ENCODE measurements at regions of chr13 and their contacts with region 1.

Region 1: GRCh38 chr13:35699805-35700510 is 223.5 kb upstream of the MAB21L1 start:
- DNase-seq: no peak

Region 2: GRCh38 chr13:35714588-35715377 is 14.8 kb after region 1 on chr13:
- intact Hi-C with region 1: loop called in 1 of 2 experiments (anchors 1 kb)
- DNase-seq: no peak

Region 3: GRCh38 chr13:35733827-35734226 is 33.9 kb after region 1 on chr13:
- intact Hi-C with region 1: loop called in 1 of 2 experiments (anchors 1 kb)
- DNase-seq: no peak

Region 4: GRCh38 chr13:35818633-35819067 is 118.7 kb after region 1 on chr13:
- intact Hi-C with region 1: no loop called
- DNase-seq: no peak

Region 5: GRCh38 chr13:35953537-35954206 is 253.7 kb after region 1 on chr13:
- intact Hi-C with region 1: loop called in 1 of 2 experiments (anchors 10 kb)
- DNase-seq: peak; percentile 87

Measured in posterior vena cava (tissue), 2 donors.